CD4-positive, alpha-beta T cell (primary cell): ENCODE measurements at regions of chr11 and their contacts with region 1.

Region 1: GRCh38 chr11:114159802-114160632 is 100.5 kb downstream of the ZBTB16 start:
- DNase-seq: peak; percentile 96 to 99 (median 98)
- ATAC-seq: peak; percentile 97
- H3K4me3 ChIP-seq: peak overlapping the region; percentile 21
- H3K4me3 Mint-ChIP-seq: peak overlapping the region; percentile 66
- H3K27ac ChIP-seq: peak overlapping the region in 1 of 2 donors; percentile 55
- H3K27ac Mint-ChIP-seq: peak overlapping the region; percentile 79
- H3K4me1 ChIP-seq: peaks cover 82% of the 10 kb centered on the region
- H3K4me1 Mint-ChIP-seq: peaks cover 86% of the 10 kb centered on the region
- H3K27me3 ChIP-seq: no peaks in the 10 kb centered on the region
- H3K27me3 Mint-ChIP-seq: no peaks in the 10 kb centered on the region
- CTCF ChIP-seq: no peak

Region 2: GRCh38 chr11:113839842-113840241 is 320.2 kb before region 1 on chr11:
- CTCF ChIA-PET with region 1: no interaction called
- POLR2A ChIA-PET with region 1: no interaction called
- intact Hi-C with region 1: no loop called
- DNase-seq: no peak
- ATAC-seq: no peak
- H3K4me3 ChIP-seq: no peak overlapping the region
- H3K4me3 Mint-ChIP-seq: no peak overlapping the region
- H3K27ac ChIP-seq: no peak overlapping the region
- H3K27ac Mint-ChIP-seq: no peak overlapping the region
- H3K4me1 ChIP-seq: no peaks in the 10 kb centered on the region
- H3K4me1 Mint-ChIP-seq: no peaks in the 10 kb centered on the region
- H3K27me3 ChIP-seq: no peaks in the 10 kb centered on the region
- H3K27me3 Mint-ChIP-seq: no peaks in the 10 kb centered on the region
- CTCF ChIP-seq: no peak

Region 3: DNA sequence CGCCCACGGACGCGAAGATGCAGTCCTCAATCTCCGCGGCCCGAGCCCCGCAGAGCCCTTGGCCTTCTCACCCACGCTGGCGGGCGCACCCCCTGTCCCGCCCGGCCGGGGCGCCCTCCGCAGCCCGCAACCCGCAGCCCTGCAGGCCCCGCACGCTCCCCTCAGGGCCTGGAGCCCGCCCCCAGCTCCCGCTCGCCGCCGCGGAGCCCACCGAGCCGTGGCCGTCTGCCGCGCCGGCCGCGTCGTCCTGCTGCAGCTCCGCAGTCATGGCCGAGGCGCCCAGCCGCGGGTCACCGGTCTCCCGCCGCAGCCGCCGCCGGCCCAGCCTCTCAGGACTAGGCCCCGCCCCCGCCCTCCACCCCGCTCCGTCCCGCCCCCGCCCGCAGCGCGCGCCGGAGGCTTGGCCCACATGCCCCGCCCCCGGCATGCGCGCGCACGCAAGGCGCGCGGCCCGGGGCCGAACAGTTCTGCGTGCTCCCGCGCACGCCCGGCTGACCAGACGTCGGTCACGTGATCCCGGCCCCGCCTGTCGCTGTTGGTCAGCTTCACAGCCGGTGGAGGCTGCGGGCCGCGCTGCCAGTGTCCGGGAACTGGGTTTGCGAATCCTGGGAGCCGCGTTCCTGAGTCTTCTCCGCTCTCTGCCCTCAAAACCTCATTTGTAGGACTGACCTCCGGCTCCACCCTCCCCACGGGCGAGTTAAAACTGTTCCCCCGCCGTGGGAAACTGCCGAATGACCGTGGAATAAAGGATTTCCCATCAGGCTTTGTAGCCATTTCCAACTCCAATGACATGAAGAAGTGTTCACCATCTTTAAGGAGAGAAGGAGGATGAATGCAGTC is 284.6 kb before region 1 on chr11 and contains the start of gene USP28:
- CTCF ChIA-PET with region 1: no interaction called
- POLR2A ChIA-PET with region 1: no interaction called
- intact Hi-C with region 1: loop called in 1 of 2 experiments (anchors 10 kb)
- DNase-seq: peak; percentile 47 to 92 (median 72)
- ATAC-seq: peak; percentile 84
- H3K4me3 ChIP-seq: peak within 1 kb of the TSS; percentile 89
- H3K4me3 Mint-ChIP-seq: peak within 1 kb of the TSS; percentile 100
- H3K27ac ChIP-seq: peak within 1 kb of the TSS; percentile 65 to 80
- H3K27ac Mint-ChIP-seq: peak within 1 kb of the TSS; percentile 91
- H3K4me1 ChIP-seq: peaks cover 19% of the 10 kb centered on the region
- H3K4me1 Mint-ChIP-seq: peaks cover 54% of the 10 kb centered on the region
- H3K27me3 ChIP-seq: no peaks in the 10 kb centered on the region
- H3K27me3 Mint-ChIP-seq: no peaks in the 10 kb centered on the region
- CTCF ChIP-seq: no peak
- total RNA-seq, gene USP28: 7.9 to 9.4 TPM

Region 4: GRCh38 chr11:114099392-114100178 is 60.4 kb before region 1 on chr11:
- CTCF ChIA-PET with region 1: no interaction called
- POLR2A ChIA-PET with region 1: interaction called, 4 read pairs
- intact Hi-C with region 1: loop called in 1 of 2 experiments (anchors 5 kb)
- DNase-seq: no peak
- ATAC-seq: no peak
- H3K4me3 ChIP-seq: no peak overlapping the region
- H3K4me3 Mint-ChIP-seq: no peak overlapping the region
- H3K27ac ChIP-seq: no peak overlapping the region
- H3K27ac Mint-ChIP-seq: no peak overlapping the region
- H3K4me1 ChIP-seq: peaks cover 20% of the 10 kb centered on the region
- H3K4me1 Mint-ChIP-seq: peaks cover 52% of the 10 kb centered on the region
- H3K27me3 ChIP-seq: no peaks in the 10 kb centered on the region
- H3K27me3 Mint-ChIP-seq: no peaks in the 10 kb centered on the region
- CTCF ChIP-seq: no peak

Region 5: GRCh38 chr11:114115451-114115928 is 44.5 kb before region 1 on chr11:
- CTCF ChIA-PET with region 1: no interaction called
- POLR2A ChIA-PET with region 1: no interaction called
- intact Hi-C with region 1: no loop called
- DNase-seq: no peak
- ATAC-seq: no peak
- H3K4me3 ChIP-seq: no peak overlapping the region
- H3K4me3 Mint-ChIP-seq: no peak overlapping the region
- H3K27ac ChIP-seq: no peak overlapping the region
- H3K27ac Mint-ChIP-seq: no peak overlapping the region
- H3K4me1 ChIP-seq: no peaks in the 10 kb centered on the region
- H3K4me1 Mint-ChIP-seq: peaks cover 17% of the 10 kb centered on the region
- H3K27me3 ChIP-seq: no peaks in the 10 kb centered on the region
- H3K27me3 Mint-ChIP-seq: peaks cover 29% of the 10 kb centered on the region
- CTCF ChIP-seq: no peak

Region 6: DNA sequence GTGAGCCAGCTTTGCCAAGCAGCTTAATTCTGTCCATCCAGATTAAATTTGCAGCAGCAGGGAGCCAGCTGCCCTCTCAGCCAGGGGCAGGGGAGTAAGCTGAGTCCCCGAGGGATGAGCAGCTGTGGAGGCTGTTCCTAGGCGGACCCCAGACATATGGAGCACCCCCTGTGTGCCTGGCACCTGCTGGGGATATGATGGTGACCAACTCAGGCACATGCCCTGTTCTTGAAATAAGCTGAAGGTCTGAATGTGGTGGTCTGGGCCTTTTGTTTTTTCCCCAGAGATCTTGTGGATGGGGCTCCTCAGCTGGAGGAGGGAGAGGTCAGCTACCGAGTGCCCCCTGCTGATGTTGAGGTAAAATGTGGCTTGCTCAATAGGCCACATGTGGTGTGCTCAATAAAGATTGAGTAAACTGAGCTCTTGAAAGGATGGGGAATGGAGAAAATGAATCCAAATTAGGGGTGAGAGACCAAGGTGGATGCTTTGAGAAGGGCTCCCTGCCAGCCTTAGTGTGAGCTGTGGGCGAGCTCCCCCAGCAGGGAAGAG is 32.9 kb after region 1 on chr11:
- CTCF ChIA-PET with region 1: interaction called, 3 read pairs
- POLR2A ChIA-PET with region 1: interaction called, 21 read pairs
- intact Hi-C with region 1: loop called in 1 of 2 experiments (anchors 5 kb)
- DNase-seq: peak in 2 of 14 experiments; percentile 26 to 27
- ATAC-seq: no peak
- H3K4me3 ChIP-seq: no peak overlapping the region
- H3K4me3 Mint-ChIP-seq: no peak overlapping the region
- H3K27ac ChIP-seq: no peak overlapping the region
- H3K27ac Mint-ChIP-seq: no peak overlapping the region
- H3K4me1 ChIP-seq: peaks cover 19% of the 10 kb centered on the region
- H3K4me1 Mint-ChIP-seq: peaks cover 47% of the 10 kb centered on the region
- H3K27me3 ChIP-seq: no peaks in the 10 kb centered on the region
- H3K27me3 Mint-ChIP-seq: no peaks in the 10 kb centered on the region
- CTCF ChIP-seq: no peak

Region 7: DNA sequence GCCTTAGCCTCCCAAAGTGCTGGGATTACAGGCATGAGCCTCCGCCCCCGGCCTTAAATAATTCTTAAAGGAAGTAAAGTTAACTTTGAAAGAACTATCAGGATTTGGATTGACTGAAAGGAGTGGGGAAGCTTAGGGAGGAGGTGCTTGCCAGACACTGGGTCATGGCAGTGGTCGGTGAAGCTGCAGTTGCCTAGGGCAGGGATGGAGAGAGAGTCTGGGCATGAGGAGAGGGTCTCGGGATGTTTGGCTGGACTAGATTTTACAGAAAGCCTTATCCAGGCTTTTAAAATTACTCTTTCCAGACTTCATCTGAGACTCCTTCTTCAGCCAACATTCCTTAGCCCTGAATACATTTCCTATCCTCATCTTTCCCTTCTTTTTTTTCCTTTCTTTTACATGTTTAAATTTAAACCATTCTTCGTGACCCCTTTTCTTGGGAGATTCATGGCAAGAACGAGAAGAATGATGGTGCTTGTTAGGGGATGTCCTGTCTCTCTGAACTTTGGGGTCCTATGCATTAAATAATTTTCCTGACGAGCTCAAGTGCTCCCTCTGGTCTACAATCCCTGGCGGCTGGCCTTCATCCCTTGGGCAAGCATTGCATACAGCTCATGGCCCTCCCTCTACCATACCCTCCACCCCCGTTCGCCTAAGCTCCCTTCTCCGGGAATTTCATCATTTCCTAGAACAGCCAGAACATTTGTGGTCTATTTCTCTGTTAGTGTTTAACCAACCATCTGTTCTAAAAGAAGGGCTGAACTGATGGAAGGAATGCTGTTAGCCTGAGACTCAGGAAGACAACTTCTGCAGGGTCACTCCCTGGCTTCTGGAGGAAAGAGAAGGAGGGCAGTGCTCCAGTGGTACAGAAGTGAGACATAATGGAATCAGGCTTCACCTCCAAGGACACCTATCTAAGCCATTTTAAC is 135.9 kb after region 1 on chr11 and contains the start of gene NNMT:
- CTCF ChIA-PET with region 1: no interaction called
- POLR2A ChIA-PET with region 1: no interaction called
- intact Hi-C with region 1: no loop called
- DNase-seq: no peak
- ATAC-seq: no peak
- H3K4me3 ChIP-seq: no peak within 1 kb of the TSS
- H3K4me3 Mint-ChIP-seq: no peak within 1 kb of the TSS
- H3K27ac ChIP-seq: no peak within 1 kb of the TSS
- H3K27ac Mint-ChIP-seq: no peak within 1 kb of the TSS
- H3K4me1 ChIP-seq: no peaks in the 10 kb centered on the region
- H3K4me1 Mint-ChIP-seq: no peaks in the 10 kb centered on the region
- H3K27me3 ChIP-seq: peaks cover 0 to 3% of the 10 kb centered on the region in 2 experiments
- H3K27me3 Mint-ChIP-seq: peaks cover 24% of the 10 kb centered on the region
- CTCF ChIP-seq: no peak
- total RNA-seq, gene NNMT: not detected

Region 8: GRCh38 chr11:114400217-114400914 is 240.3 kb after region 1 on chr11 and contains the starts of genes C11orf71 and RBM7:
- CTCF ChIA-PET with region 1: no interaction called
- POLR2A ChIA-PET with region 1: no interaction called
- intact Hi-C with region 1: loop called in 1 of 2 experiments (anchors 10 kb)
- DNase-seq: peak; percentile 95 to 100 (median 98)
- ATAC-seq: peak; percentile 91
- H3K4me3 ChIP-seq: peak within 1 kb of the TSS; percentile 92
- H3K4me3 Mint-ChIP-seq: peak within 1 kb of the TSS; percentile 99
- H3K27ac ChIP-seq: peak within 1 kb of the TSS; percentile 93 to 96
- H3K27ac Mint-ChIP-seq: peak within 1 kb of the TSS; percentile 100
- H3K4me1 ChIP-seq: peaks cover 9% of the 10 kb centered on the region
- H3K4me1 Mint-ChIP-seq: peaks cover 63% of the 10 kb centered on the region
- H3K27me3 ChIP-seq: no peaks in the 10 kb centered on the region
- H3K27me3 Mint-ChIP-seq: no peaks in the 10 kb centered on the region
- CTCF ChIP-seq: peak; percentile 28
- total RNA-seq, gene C11orf71: 6.1 to 7.6 TPM
- total RNA-seq, gene RBM7: 76.1 to 81.9 TPM